HepG2 (cell line): ENCODE measurements at regions of chr5 and their contacts with region 1.

Region 1: DNA sequence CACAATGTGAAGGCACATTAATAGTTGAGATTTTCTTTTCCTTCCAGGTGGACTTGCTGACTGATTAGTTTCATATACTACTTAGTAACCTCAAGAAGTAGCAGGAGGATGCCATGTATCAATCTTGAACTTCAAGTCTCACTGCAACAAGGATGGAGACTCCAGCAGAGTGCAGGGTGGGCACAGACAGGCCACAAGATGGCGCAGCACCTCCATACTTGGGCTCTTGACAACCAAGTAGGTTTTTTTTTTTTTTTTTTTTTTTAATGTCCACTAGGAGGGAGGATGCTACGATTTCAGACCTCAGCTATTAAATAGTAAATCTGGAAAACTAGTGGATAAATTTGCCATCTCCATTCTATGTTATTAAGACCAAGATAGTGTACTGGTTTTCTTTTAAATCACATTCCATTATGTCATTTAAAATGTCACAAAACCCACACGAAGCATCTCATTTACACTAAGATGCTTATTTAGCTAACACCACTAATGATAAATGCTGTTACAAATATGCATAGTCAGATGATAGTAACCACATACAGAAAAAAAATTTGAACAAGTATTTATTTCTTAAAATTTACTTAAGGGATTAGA is 58.6 kb downstream of the IL6ST start:
- DNase-seq: peak; percentile 65
- ATAC-seq: peak; percentile 12
- H3K4me3 ChIP-seq: no peak overlapping the region
- H3K27ac ChIP-seq: no peak overlapping the region
- H3K4me1 ChIP-seq: peaks cover 49% of the 10 kb centered on the region
- H3K27me3 ChIP-seq: no peaks in the 10 kb centered on the region
- CTCF ChIP-seq: peak; percentile 85
- EP300 ChIP-seq: no peak
- POLR2A ChIP-seq: no peak
- RAD21 ChIP-seq: peak; percentile 65

Region 2: GRCh38 chr5:55763746-55764420 is 172.3 kb before region 1 on chr5:
- CTCF ChIA-PET with region 1: no interaction called
- POLR2A ChIA-PET with region 1: no interaction called
- in situ Hi-C with region 1: no loop called
- intact Hi-C with region 1: no loop called
- DNase-seq: no peak
- ATAC-seq: no peak
- H3K4me3 ChIP-seq: no peak overlapping the region
- H3K27ac ChIP-seq: no peak overlapping the region
- H3K4me1 ChIP-seq: no peaks in the 10 kb centered on the region
- H3K27me3 ChIP-seq: peaks cover 0 to 1% of the 10 kb centered on the region in 2 experiments; a peak in 1 of 5 replicates
- CTCF ChIP-seq: no peak
- EP300 ChIP-seq: no peak
- POLR2A ChIP-seq: no peak
- RAD21 ChIP-seq: no peak

Region 3: GRCh38 chr5:56264417-56265025 is 328.3 kb after region 1 on chr5:
- CTCF ChIA-PET with region 1: interaction called, 22 read pairs
- POLR2A ChIA-PET with region 1: no interaction called
- in situ Hi-C with region 1: no loop called
- intact Hi-C with region 1: loop called (anchors 1 kb)
- DNase-seq: peak; percentile 59
- ATAC-seq: peak; percentile 93
- H3K4me3 ChIP-seq: no peak overlapping the region
- H3K27ac ChIP-seq: no peak overlapping the region
- H3K4me1 ChIP-seq: peaks cover 14% of the 10 kb centered on the region
- H3K27me3 ChIP-seq: no peaks in the 10 kb centered on the region; a peak in 1 of 5 replicates
- CTCF ChIP-seq: peak; percentile 85
- EP300 ChIP-seq: no peak
- POLR2A ChIP-seq: no peak
- RAD21 ChIP-seq: peak; percentile 64; the same call in 1 of the 2 replicates

Region 4: DNA sequence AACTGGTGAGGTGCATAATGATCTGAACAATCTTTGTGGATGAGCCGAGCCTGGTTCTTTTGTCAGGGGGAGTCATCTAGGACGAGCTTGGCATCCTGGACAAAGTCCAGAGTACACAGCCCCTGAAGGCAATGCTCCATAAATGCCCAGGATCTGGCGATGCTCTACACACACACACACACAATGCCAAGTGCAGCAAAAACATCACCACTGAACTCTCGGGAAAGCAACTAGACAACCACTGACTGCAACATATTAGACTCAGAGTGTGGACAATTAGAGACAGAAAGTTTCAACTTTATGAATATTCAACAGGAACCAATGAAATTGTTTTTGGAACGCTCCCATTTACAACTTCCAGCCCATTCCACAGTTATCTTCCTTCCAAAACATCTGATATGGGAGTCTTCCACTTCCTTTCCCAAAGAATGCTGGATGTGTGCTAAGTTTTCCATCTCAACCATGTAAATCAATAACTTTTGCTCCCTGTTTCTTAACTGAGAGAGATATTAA is 524.5 kb after region 1 on chr5:
- CTCF ChIA-PET with region 1: no interaction called
- POLR2A ChIA-PET with region 1: no interaction called
- in situ Hi-C with region 1: no loop called
- intact Hi-C with region 1: loop called (anchors 10 kb)
- DNase-seq: peak; percentile 58
- ATAC-seq: peak; percentile 51; the same call in 2 of the 3 replicates
- H3K4me3 ChIP-seq: no peak overlapping the region
- H3K27ac ChIP-seq: peak overlapping the region; percentile 32
- H3K4me1 ChIP-seq: peaks cover 49% of the 10 kb centered on the region
- H3K27me3 ChIP-seq: no peaks in the 10 kb centered on the region
- CTCF ChIP-seq: no peak
- EP300 ChIP-seq: no peak
- POLR2A ChIP-seq: no peak
- RAD21 ChIP-seq: no peak

Region 5: DNA sequence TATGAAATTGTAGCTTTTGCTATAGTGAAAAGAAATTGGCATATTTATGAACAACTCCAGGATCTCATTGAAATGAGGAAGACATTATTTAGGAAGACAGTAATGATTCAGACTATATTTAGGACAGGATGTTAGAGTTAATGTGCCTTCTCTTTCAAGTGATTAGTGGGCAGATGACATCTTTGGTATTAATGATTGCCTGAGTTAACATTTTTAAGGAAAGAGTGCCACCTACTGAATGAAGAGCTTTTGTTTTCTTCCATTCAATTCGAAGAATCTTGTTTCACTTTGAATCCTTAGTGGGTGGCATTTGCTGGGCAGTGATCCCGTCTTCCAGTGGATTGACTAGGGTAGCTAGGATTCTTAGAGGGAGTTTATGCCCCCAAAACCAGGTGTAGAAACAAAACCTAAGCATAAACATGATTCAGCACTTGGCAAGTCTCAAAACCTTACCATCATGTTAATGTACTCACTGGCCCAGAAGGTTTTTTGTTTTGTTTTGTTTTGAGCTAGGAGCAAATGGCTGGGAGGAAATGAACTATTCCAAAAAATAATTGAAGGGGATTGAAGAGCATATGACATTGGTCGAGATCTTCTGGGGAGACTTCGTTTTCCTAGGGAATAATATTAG is 902.3 kb after region 1 on chr5:
- CTCF ChIA-PET with region 1: no interaction called
- POLR2A ChIA-PET with region 1: no interaction called
- in situ Hi-C with region 1: loop called (anchors 25 kb)
- intact Hi-C with region 1: loop called (anchors 10 kb)
- DNase-seq: peak; percentile 33
- ATAC-seq: no peak
- H3K4me3 ChIP-seq: no peak overlapping the region
- H3K27ac ChIP-seq: no peak overlapping the region
- H3K4me1 ChIP-seq: peaks cover 53% of the 10 kb centered on the region
- H3K27me3 ChIP-seq: no peaks in the 10 kb centered on the region
- CTCF ChIP-seq: peak; percentile 66
- EP300 ChIP-seq: no peak
- POLR2A ChIP-seq: no peak
- RAD21 ChIP-seq: peak; percentile 56